Activated CD4-positive, alpha-beta memory T cell treated with anti-CD3 and anti-CD28 coated beads, Interleukin-2, amount 10 ng/mL, durations not matched to agents 7 days and 5 days (primary cell): ENCODE measurements at regions of chr3 and their contacts with region 1.

Region 1: DNA sequence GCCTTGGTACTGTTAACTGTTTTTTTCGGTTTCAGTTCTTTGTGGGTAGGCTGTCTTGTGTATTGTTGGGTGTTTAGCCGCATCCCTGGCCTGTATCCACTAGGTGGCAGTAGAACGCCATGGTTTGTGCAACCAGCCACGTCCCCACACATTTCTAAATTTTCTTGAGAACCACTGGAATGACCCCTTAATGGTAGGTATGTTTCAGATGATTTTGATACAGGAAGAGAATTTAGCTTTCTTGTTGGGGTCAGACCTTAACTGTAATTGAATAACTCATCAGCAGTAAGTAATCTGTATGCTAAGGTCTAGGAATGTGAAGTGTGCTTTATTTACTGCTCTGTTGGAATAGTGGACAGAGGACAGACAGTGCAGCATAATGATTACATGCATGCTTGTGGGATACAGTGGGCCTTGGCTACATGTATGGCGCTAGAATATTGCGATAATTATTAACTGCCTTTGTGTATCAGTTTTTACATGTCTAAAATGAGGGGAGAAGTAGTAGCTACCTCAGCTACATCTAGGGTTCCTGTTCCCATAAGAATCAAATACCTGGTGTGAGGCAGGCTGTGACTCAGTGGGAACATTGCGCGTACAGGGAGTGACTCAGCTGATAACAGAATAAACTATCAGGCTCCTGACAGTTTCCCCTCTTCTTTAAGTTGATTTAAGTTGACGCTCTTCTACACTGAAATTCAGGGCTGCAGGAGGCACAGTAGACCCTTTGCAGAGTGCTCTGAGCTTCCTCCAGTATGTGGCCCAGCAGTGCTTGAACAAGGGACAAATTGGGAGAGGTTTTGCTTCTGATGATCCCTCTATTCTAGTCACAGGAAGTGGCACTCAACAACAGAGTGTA is 25.0 kb upstream of the GPR171 start:
- DNase-seq: peak; percentile 85
- H3K4me3 Mint-ChIP-seq: peak overlapping the region; percentile 21
- H3K27ac Mint-ChIP-seq: peak overlapping the region; percentile 69
- H3K4me1 Mint-ChIP-seq: peaks cover 55% of the 10 kb centered on the region
- H3K27me3 Mint-ChIP-seq: no peaks in the 10 kb centered on the region

Region 2: GRCh38 chr3:151203051-151203420 is 25.0 kb before region 1 on chr3 and contains the start of gene GPR171:
- CTCF ChIA-PET with region 1: interaction called, 24 read pairs
- POLR2A ChIA-PET with region 1: interaction called, 40 read pairs
- DNase-seq: peak; percentile 82
- H3K4me3 Mint-ChIP-seq: peak within 1 kb of the TSS; percentile 90
- H3K27ac Mint-ChIP-seq: peak within 1 kb of the TSS; percentile 98
- H3K4me1 Mint-ChIP-seq: peaks cover 60% of the 10 kb centered on the region
- H3K27me3 Mint-ChIP-seq: no peaks in the 10 kb centered on the region
- total RNA-seq, gene GPR171: 204 to 222 TPM

Region 3: GRCh38 chr3:151210676-151211381 is 17.2 kb before region 1 on chr3:
- CTCF ChIA-PET with region 1: interaction called, 24 read pairs
- POLR2A ChIA-PET with region 1: interaction called, 12 read pairs
- DNase-seq: no peak
- H3K4me3 Mint-ChIP-seq: peak overlapping the region; percentile 60
- H3K27ac Mint-ChIP-seq: peak overlapping the region; percentile 81
- H3K4me1 Mint-ChIP-seq: peaks cover 54% of the 10 kb centered on the region
- H3K27me3 Mint-ChIP-seq: no peaks in the 10 kb centered on the region

Region 4: DNA sequence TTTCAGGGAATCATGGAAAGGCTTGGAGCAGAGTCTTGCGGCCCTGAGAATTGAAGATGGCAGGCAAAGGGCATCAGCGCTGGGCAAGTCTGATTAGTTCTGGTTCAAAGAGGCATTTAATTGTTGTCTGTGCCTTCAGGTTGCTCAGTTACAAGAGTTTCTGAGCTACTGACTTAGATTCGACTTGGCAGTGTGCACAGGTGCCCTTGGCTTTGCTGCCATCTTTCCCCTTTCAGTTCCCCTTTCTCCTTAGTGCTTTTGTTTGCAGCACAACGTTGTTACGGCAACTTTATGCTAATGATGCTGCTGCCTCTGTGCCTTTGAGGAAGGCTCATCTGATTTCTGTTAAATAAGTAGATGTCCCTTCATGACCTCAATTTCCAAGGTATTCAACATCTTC is 37.8 kb after region 1 on chr3:
- CTCF ChIA-PET with region 1: interaction called, 26 read pairs
- POLR2A ChIA-PET with region 1: interaction called, 5 read pairs
- DNase-seq: no peak
- H3K4me3 Mint-ChIP-seq: no peak overlapping the region
- H3K27ac Mint-ChIP-seq: no peak overlapping the region
- H3K4me1 Mint-ChIP-seq: peaks cover 28% of the 10 kb centered on the region
- H3K27me3 Mint-ChIP-seq: no peaks in the 10 kb centered on the region

Region 5: DNA sequence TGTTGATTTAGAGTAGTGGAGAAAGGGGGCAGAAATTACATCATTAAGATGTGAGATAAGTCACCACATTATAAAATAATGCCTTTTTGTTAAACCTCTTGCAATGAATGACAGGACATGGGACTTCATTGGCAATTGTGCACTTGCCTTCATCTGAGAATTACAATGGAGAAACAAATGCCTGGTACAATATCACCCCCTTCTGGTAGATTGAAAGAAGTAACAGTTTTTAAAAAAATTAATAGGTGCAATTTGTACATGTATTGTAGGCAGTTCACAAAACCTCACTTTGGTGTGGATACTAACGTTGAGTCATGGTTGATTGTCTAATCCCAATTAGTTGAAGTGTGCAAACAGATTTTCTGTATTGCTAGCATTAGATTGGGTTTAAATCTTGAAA is 54.9 kb after region 1 on chr3:
- CTCF ChIA-PET with region 1: interaction called, 160 read pairs
- POLR2A ChIA-PET with region 1: interaction called, 6 read pairs
- DNase-seq: no peak
- H3K4me3 Mint-ChIP-seq: no peak overlapping the region
- H3K27ac Mint-ChIP-seq: peak overlapping the region; percentile 60
- H3K4me1 Mint-ChIP-seq: peaks cover 45% of the 10 kb centered on the region
- H3K27me3 Mint-ChIP-seq: no peaks in the 10 kb centered on the region

Region 6: GRCh38 chr3:151327571-151328198 is 99.6 kb after region 1 on chr3:
- CTCF ChIA-PET with region 1: interaction called, 32 read pairs
- POLR2A ChIA-PET with region 1: no interaction called
- DNase-seq: no peak
- H3K4me3 Mint-ChIP-seq: no peak overlapping the region
- H3K27ac Mint-ChIP-seq: no peak overlapping the region
- H3K4me1 Mint-ChIP-seq: peaks cover 6% of the 10 kb centered on the region
- H3K27me3 Mint-ChIP-seq: peaks cover 6% of the 10 kb centered on the region